K562 (cell line): ENCODE measurements at regions of chr11 and their contacts with region 1.

Region 1: DNA sequence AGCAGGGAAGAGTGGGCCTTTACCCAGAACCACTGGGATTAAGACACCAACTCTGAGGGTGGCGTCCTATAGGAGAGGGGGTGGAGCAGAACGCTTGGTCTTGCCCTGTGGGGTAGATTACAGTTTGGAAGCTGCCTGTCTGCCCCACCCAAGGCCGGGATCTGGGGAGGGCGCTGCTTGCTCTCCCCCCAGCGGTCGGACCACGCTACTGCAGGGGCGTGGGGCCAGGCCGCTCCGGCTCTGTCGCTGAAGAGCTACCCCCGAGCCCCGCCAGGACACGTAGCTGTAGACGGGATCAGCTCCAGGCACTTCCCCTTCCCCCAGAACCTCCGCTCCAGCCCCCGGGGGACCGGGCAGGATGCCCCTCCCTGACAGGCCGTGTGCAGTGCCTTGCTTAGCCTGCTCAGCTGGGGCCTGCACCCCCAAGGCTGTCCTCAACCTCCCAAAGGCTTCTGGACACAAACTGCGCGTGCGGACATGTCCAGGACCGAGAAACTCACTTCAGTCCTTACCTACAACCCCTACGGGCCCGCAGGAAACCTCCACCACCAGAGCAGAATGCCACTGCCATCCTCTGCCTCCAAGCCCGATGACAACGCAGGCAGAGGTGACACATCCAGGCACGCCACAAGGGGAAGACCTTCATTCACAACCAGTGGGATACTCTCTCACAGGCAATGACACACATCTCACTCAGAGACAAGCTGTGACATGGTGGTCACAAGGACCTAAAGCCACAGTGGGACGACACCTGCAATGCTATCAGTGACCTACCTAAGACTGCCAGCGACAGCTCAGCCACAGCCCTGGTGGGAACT is 3.6 kb downstream of the AHNAK start:
- DNase-seq: peak; percentile 83 to 91 (median 87)
- ATAC-seq: peak; percentile 74
- H3K4me3 ChIP-seq: peak overlapping the region; percentile 14; the same call in 1 of the 2 replicates
- H3K27ac ChIP-seq: peak overlapping the region; percentile 27
- H3K4me1 ChIP-seq: peaks cover 77 to 88% of the 10 kb centered on the region in 2 experiments
- H3K27me3 ChIP-seq: no peaks in the 10 kb centered on the region
- CTCF ChIP-seq: peak; percentile 97 to 98 (median 97)
- EP300 ChIP-seq: 0 out of 2 replicates have a peak, but pooled peaks have one; percentile 7
- POLR2A ChIP-seq: no peak
- RAD21 ChIP-seq: peak; percentile 94 to 99

Region 2: DNA sequence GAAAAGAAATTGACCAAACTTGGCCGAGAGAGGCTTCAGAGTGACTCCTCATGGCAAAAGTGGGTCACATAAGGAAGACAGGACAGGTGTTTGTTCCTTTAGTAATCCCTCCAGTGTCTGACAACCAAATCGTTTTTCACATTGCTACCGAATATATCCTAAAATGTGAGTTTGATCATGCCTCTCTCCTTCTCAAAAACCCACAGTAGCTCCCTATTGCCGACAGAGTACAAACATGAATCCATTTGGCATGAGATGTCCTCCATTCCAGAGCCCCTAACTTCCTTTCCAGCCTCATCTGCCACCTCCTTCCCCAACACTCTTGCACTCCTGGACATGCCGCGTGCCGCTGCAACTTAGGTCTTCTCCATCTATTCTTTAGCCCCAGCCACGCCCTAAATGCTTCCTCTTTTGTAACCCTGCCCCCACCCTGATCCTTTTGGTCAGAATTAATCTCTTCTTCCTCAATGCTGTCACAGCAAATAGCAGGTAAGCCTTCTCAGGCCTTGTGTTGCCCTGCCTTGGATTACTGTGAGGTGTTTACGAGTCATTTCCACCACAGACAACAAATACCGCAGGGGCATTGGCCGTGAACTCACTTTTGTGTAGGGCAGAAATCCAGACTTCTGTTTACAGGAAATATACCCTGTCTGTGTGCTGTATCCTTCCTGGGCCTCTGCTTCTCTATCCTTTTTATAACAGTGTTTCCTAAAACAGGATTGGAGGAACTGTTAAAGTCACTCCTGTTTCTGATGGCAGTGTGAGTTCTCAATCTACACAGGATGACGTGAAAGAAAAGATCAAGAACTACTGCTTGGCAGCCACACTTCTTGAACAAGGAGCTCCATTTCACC is 509.5 kb before region 1 on chr11:
- CTCF ChIA-PET with region 1: no interaction called
- POLR2A ChIA-PET with region 1: no interaction called
- in situ Hi-C with region 1: no loop called
- intact Hi-C with region 1: no loop called
- DNase-seq: peak; percentile 29 to 44 (median 35)
- ATAC-seq: peak; percentile 80
- H3K4me3 ChIP-seq: no peak overlapping the region
- H3K27ac ChIP-seq: no peak overlapping the region
- H3K4me1 ChIP-seq: peaks cover 4 to 8% of the 10 kb centered on the region in 2 experiments; a peak in 3 of 5 replicates
- H3K27me3 ChIP-seq: no peaks in the 10 kb centered on the region
- CTCF ChIP-seq: no peak
- EP300 ChIP-seq: no peak
- POLR2A ChIP-seq: no peak
- RAD21 ChIP-seq: no peak

Region 3: DNA sequence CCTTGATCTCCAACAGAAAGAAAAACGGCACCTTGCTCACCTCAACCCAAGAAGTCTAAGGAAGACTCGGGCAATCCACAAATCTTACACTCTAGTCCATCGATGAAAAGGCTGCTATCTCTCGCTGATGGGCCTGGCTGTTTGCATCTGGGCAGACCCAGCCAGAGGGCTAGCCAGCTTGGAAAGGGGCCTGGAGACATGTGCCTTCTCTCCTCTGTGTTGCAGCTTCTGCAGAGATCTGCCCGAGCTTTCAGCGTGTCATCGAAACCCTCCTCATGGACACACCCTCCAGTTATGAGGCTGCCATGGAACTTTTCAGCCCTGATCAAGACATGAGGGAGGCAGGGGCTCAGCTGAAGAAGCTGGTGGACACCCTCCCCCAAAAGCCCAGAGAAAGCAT is 121.0 kb before region 1 on chr11:
- CTCF ChIA-PET with region 1: interaction called, 8 read pairs
- POLR2A ChIA-PET with region 1: interaction called, 12 read pairs
- in situ Hi-C with region 1: no loop called
- intact Hi-C with region 1: loop called (anchors 1 kb)
- DNase-seq: no peak
- ATAC-seq: no peak
- H3K4me3 ChIP-seq: no peak overlapping the region
- H3K27ac ChIP-seq: no peak overlapping the region
- H3K4me1 ChIP-seq: peaks cover 33 to 35% of the 10 kb centered on the region in 2 experiments
- H3K27me3 ChIP-seq: no peaks in the 10 kb centered on the region
- CTCF ChIP-seq: no peak
- EP300 ChIP-seq: no peak
- POLR2A ChIP-seq: no peak
- RAD21 ChIP-seq: no peak

Region 4: DNA sequence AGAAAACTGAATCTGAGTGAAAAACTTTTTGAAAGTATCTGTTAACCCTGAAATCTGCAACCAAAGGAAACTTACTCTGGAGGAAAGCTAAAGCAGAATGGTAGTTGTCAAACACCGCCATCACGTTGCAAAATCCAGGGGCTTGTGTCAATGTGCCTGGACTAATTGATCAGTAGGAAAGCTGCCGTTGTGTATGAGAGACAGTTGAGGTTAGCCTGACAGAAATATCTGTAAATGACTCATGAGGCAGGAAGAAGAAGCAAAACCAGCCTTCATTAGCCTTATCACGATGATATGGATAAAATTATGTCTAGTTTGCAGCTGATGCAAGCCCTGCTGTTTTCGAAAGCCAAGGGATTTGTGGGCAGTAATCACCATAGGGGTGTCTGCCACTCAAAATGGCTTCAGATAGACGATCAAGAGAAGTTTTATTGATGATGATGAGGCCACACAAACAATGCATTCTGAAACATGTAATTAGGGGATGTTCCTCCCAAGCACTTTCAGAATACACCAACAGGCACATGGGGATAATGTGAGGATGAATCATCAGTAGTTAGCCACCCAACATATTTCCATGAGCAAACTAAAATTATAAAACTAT is 115.2 kb before region 1 on chr11:
- CTCF ChIA-PET with region 1: interaction called, 8 read pairs
- POLR2A ChIA-PET with region 1: interaction called, 12 read pairs
- in situ Hi-C with region 1: no loop called
- intact Hi-C with region 1: loop called (anchors 1 kb)
- DNase-seq: no peak
- ATAC-seq: no peak
- H3K4me3 ChIP-seq: no peak overlapping the region
- H3K27ac ChIP-seq: peak overlapping the region; percentile 37; the same call in 2 of the 3 replicates
- H3K4me1 ChIP-seq: peaks cover 16 to 30% of the 10 kb centered on the region in 2 experiments
- H3K27me3 ChIP-seq: no peaks in the 10 kb centered on the region
- CTCF ChIP-seq: no peak
- EP300 ChIP-seq: no peak; the same call in 1 of the 2 replicates
- POLR2A ChIP-seq: no peak
- RAD21 ChIP-seq: peak in 1 of 2 experiments; percentile 16; a peak in 1 of 4 replicates

Region 5: GRCh38 chr11:62491231-62491948 is 51.6 kb before region 1 on chr11:
- CTCF ChIA-PET with region 1: no interaction called
- POLR2A ChIA-PET with region 1: no interaction called
- in situ Hi-C with region 1: no loop called
- intact Hi-C with region 1: no loop called
- DNase-seq: peak in 1 of 4 experiments; percentile 10
- ATAC-seq: no peak
- H3K4me3 ChIP-seq: no peak overlapping the region
- H3K27ac ChIP-seq: no peak overlapping the region
- H3K4me1 ChIP-seq: peaks cover 0 to 16% of the 10 kb centered on the region in 2 experiments; a peak in 3 of 5 replicates
- H3K27me3 ChIP-seq: no peaks in the 10 kb centered on the region
- CTCF ChIP-seq: no peak
- EP300 ChIP-seq: no peak
- POLR2A ChIP-seq: no peak
- RAD21 ChIP-seq: no peak

Region 6: GRCh38 chr11:62501432-62502379 is 41.3 kb before region 1 on chr11:
- CTCF ChIA-PET with region 1: no interaction called
- POLR2A ChIA-PET with region 1: interaction called, 4 read pairs
- in situ Hi-C with region 1: no loop called
- intact Hi-C with region 1: loop called (anchors 2 kb)
- DNase-seq: peak in 1 of 4 experiments; percentile 30
- ATAC-seq: peak; percentile 13; the same call in 2 of the 3 replicates
- H3K4me3 ChIP-seq: no peak overlapping the region
- H3K27ac ChIP-seq: peak overlapping the region; percentile 7; the same call in 2 of the 3 replicates
- H3K4me1 ChIP-seq: peaks cover 58 to 62% of the 10 kb centered on the region in 2 experiments; a peak in 4 of 5 replicates
- H3K27me3 ChIP-seq: no peaks in the 10 kb centered on the region
- CTCF ChIP-seq: no peak
- EP300 ChIP-seq: no peak
- POLR2A ChIP-seq: no peak
- RAD21 ChIP-seq: no peak

Region 7: GRCh38 chr11:62508268-62509058 is 34.5 kb before region 1 on chr11:
- CTCF ChIA-PET with region 1: no interaction called
- POLR2A ChIA-PET with region 1: interaction called, 3 read pairs
- in situ Hi-C with region 1: no loop called
- intact Hi-C with region 1: loop called (anchors 2 kb)
- DNase-seq: peak; percentile 50 to 72 (median 66)
- ATAC-seq: peak; percentile 66
- H3K4me3 ChIP-seq: no peak overlapping the region
- H3K27ac ChIP-seq: 0 out of 3 replicates have a peak overlapping the region, but pooled peaks have one; percentile 18
- H3K4me1 ChIP-seq: peaks cover 30 to 34% of the 10 kb centered on the region in 2 experiments
- H3K27me3 ChIP-seq: no peaks in the 10 kb centered on the region
- CTCF ChIP-seq: peak; percentile 15 to 61 (median 28); a peak in 4 of 6 replicates
- EP300 ChIP-seq: 0 out of 2 replicates have a peak, but pooled peaks have one; percentile 10
- POLR2A ChIP-seq: no peak
- RAD21 ChIP-seq: no peak; a peak in 1 of 4 replicates

Region 8: GRCh38 chr11:62556108-62556871 is 13.3 kb after region 1 on chr11:
- CTCF ChIA-PET with region 1: interaction called, 3 read pairs
- POLR2A ChIA-PET with region 1: interaction called, 17 read pairs
- in situ Hi-C with region 1: no loop called
- intact Hi-C with region 1: no loop called
- DNase-seq: peak; percentile 56 to 79 (median 69)
- ATAC-seq: peak; percentile 54
- H3K4me3 ChIP-seq: no peak overlapping the region
- H3K27ac ChIP-seq: peak overlapping the region; percentile 73
- H3K4me1 ChIP-seq: peaks cover 65 to 72% of the 10 kb centered on the region in 2 experiments
- H3K27me3 ChIP-seq: no peaks in the 10 kb centered on the region
- CTCF ChIP-seq: no peak
- EP300 ChIP-seq: no peak; the same call in 1 of the 2 replicates
- POLR2A ChIP-seq: no peak
- RAD21 ChIP-seq: no peak; a peak in 1 of 4 replicates

Region 9: GRCh38 chr11:62580959-62581715 is 38.2 kb after region 1 on chr11:
- CTCF ChIA-PET with region 1: no interaction called
- POLR2A ChIA-PET with region 1: no interaction called
- in situ Hi-C with region 1: no loop called
- intact Hi-C with region 1: no loop called
- DNase-seq: no peak
- ATAC-seq: no peak
- H3K4me3 ChIP-seq: no peak overlapping the region
- H3K27ac ChIP-seq: no peak overlapping the region; the same call in 2 of the 3 replicates
- H3K4me1 ChIP-seq: peaks cover 0 to 9% of the 10 kb centered on the region in 2 experiments; a peak in 3 of 5 replicates
- H3K27me3 ChIP-seq: no peaks in the 10 kb centered on the region
- CTCF ChIP-seq: no peak
- EP300 ChIP-seq: no peak
- POLR2A ChIP-seq: no peak
- RAD21 ChIP-seq: no peak